ENCODE measurements at regions of chr17 and their contacts with region 1.

Region 1: GRCh38 chr17:27879987-27880608 is 13.1 kb downstream of the LYRM9 start:
- DNase-seq: peak; percentile 84
- ATAC-seq: peak; percentile 95
- H3K4me3 Mint-ChIP-seq: no peak overlapping the region
- H3K27ac Mint-ChIP-seq: no peak overlapping the region
- H3K4me1 Mint-ChIP-seq: peaks cover 19% of the 10 kb centered on the region
- H3K27me3 Mint-ChIP-seq: no peaks in the 10 kb centered on the region
- CTCF ChIP-seq: peak; percentile 73; the same call in 1 of the 2 replicates

Region 2: GRCh38 chr17:27760069-27760885 is 119.8 kb before region 1 on chr17:
- CTCF ChIA-PET with region 1: interaction called, 149 read pairs
- POLR2A ChIA-PET with region 1: no interaction called
- DNase-seq: peak; percentile 87
- ATAC-seq: peak; percentile 85
- H3K4me3 Mint-ChIP-seq: no peak overlapping the region
- H3K27ac Mint-ChIP-seq: no peak overlapping the region
- H3K4me1 Mint-ChIP-seq: no peaks in the 10 kb centered on the region
- H3K27me3 Mint-ChIP-seq: no peaks in the 10 kb centered on the region
- CTCF ChIP-seq: peak; percentile 99

Region 3: GRCh38 chr17:27782791-27783206 is 97.3 kb before region 1 on chr17:
- CTCF ChIA-PET with region 1: interaction called, 11 read pairs
- POLR2A ChIA-PET with region 1: no interaction called
- DNase-seq: no peak
- ATAC-seq: no peak
- H3K4me3 Mint-ChIP-seq: no peak overlapping the region
- H3K27ac Mint-ChIP-seq: no peak overlapping the region
- H3K4me1 Mint-ChIP-seq: peaks cover 16% of the 10 kb centered on the region
- H3K27me3 Mint-ChIP-seq: no peaks in the 10 kb centered on the region; the same call in 1 of the 2 replicates
- CTCF ChIP-seq: no peak

Region 4: GRCh38 chr17:27805520-27806146 is 74.5 kb before region 1 on chr17:
- CTCF ChIA-PET with region 1: interaction called, 480 read pairs
- POLR2A ChIA-PET with region 1: interaction called, 8 read pairs
- DNase-seq: peak; percentile 91
- ATAC-seq: peak; percentile 89
- H3K4me3 Mint-ChIP-seq: peak overlapping the region; percentile 51
- H3K27ac Mint-ChIP-seq: no peak overlapping the region
- H3K4me1 Mint-ChIP-seq: peaks cover 23% of the 10 kb centered on the region
- H3K27me3 Mint-ChIP-seq: no peaks in the 10 kb centered on the region
- CTCF ChIP-seq: peak; percentile 74

Region 5: GRCh38 chr17:27892866-27893769 is 13.0 kb after region 1 on chr17 and contains the start of gene LYRM9:
- CTCF ChIA-PET with region 1: interaction called, 65 read pairs
- POLR2A ChIA-PET with region 1: interaction called, 3 read pairs
- DNase-seq: peak; percentile 95
- ATAC-seq: peak; percentile 90
- H3K4me3 Mint-ChIP-seq: peak within 1 kb of the TSS; percentile 61
- H3K27ac Mint-ChIP-seq: peak within 1 kb of the TSS; percentile 6; the same call in 1 of the 2 replicates
- H3K4me1 Mint-ChIP-seq: peaks cover 74% of the 10 kb centered on the region
- H3K27me3 Mint-ChIP-seq: peaks cover 10% of the 10 kb centered on the region
- CTCF ChIP-seq: peak; percentile 71; the same call in 1 of the 2 replicates
- total RNA-seq, gene LYRM9: 3.6 to 4.1 TPM (median 3.8 TPM) in 3 replicates

Region 6: DNA sequence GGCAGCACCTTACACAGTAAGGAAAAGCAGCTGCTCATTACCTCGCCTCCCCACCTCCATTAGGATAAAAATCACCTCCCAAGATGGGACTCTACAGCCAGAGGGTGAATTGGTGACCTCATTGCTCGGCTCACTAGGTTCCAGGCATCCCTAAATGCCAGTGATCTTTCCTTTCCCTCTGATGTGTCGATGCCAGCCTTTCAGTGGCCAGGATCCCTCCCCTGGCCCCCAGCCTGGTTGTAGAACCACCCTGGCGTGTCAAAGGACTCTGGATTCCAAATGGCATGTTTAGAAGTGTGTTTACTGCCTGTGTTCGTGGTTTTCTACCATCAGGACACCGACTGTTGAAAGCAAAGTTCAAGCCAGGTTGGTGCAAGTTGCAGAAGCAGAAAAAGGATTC is 85.1 kb after region 1 on chr17:
- CTCF ChIA-PET with region 1: no interaction called
- POLR2A ChIA-PET with region 1: no interaction called
- DNase-seq: no peak
- ATAC-seq: no peak
- H3K4me3 Mint-ChIP-seq: no peak overlapping the region
- H3K27ac Mint-ChIP-seq: no peak overlapping the region
- H3K4me1 Mint-ChIP-seq: peaks cover 16% of the 10 kb centered on the region
- H3K27me3 Mint-ChIP-seq: no peaks in the 10 kb centered on the region; the same call in 1 of the 2 replicates
- CTCF ChIP-seq: no peak